ENCODE measurements at regions of chr6 and their contacts with region 1.

Region 1: GRCh38 chr6:27902335-27903314 is 9.6 kb downstream of the OR2B2 start:
- DNase-seq: peak; percentile 83 to 95 (median 91)
- ATAC-seq: peak; percentile 80
- H3K4me3 ChIP-seq: peak overlapping the region; percentile 61
- H3K4me3 Mint-ChIP-seq: peak overlapping the region; percentile 88
- H3K27ac ChIP-seq: peak overlapping the region; percentile 69 to 89
- H3K27ac Mint-ChIP-seq: peak overlapping the region; percentile 97
- H3K4me1 ChIP-seq: peaks cover 4% of the 10 kb centered on the region
- H3K4me1 Mint-ChIP-seq: peaks cover 5% of the 10 kb centered on the region
- H3K27me3 ChIP-seq: no peaks in the 10 kb centered on the region
- H3K27me3 Mint-ChIP-seq: peaks cover 8% of the 10 kb centered on the region
- CTCF ChIP-seq: no peak

Region 2: DNA sequence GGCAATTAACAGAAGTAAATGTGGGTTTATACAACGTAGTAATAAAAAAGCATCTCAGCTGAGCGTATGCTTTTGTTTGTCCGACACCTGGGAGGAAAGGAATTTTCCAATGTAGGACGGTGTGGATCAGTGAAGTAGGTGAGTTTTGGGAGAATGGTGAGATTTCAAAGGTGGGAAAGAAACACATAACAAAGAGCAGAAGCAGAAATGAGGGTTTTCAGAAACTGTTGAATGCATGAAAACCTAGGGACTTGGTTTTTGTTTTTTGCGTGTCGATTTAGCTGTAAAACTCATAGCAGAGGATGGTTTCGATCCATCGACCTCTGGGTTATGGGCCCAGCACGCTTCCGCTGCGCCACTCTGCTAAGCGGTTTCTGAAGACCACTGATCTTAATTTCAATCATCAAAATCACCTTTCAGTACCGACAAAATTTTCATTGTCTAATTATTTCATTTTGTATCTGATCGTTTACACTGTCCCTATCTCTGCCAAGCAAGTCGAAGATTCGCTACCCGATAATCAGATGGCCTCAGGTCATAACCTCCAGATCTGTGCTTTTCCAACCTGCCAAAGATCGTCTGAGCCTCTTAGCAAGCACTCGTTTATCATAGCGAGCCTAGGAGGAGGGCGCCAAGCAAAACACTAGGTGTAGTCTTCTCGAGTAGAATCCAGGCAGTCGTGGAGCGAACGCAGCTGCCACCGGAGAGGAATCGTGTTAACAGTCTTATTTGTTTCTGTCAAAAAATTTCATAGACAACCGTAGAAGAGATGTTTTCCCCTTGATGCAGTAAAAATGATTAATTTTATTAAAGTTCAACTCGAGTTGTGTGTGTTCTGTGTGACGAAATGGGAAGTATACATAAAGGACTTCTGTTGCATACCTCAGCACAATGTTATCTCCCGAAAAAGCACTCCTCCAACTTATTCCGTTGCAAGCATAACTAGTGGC is 569.7 kb before region 1 on chr6:
- CTCF ChIA-PET with region 1: no interaction called
- POLR2A ChIA-PET with region 1: no interaction called
- intact Hi-C with region 1: loop called in 1 of 2 experiments (anchors 10 kb)
- DNase-seq: peak in 8 of 9 experiments; percentile 12 to 78 (median 60)
- ATAC-seq: peak; percentile 86
- H3K4me3 ChIP-seq: peak overlapping the region; percentile 53
- H3K4me3 Mint-ChIP-seq: peak overlapping the region; percentile 87
- H3K27ac ChIP-seq: no peak overlapping the region
- H3K27ac Mint-ChIP-seq: peak overlapping the region; percentile 82
- H3K4me1 ChIP-seq: no peaks in the 10 kb centered on the region
- H3K4me1 Mint-ChIP-seq: peaks cover 15% of the 10 kb centered on the region
- H3K27me3 ChIP-seq: peaks cover 0 to 4% of the 10 kb centered on the region in 2 experiments
- H3K27me3 Mint-ChIP-seq: peaks cover 21% of the 10 kb centered on the region
- CTCF ChIP-seq: no peak

Region 3: DNA sequence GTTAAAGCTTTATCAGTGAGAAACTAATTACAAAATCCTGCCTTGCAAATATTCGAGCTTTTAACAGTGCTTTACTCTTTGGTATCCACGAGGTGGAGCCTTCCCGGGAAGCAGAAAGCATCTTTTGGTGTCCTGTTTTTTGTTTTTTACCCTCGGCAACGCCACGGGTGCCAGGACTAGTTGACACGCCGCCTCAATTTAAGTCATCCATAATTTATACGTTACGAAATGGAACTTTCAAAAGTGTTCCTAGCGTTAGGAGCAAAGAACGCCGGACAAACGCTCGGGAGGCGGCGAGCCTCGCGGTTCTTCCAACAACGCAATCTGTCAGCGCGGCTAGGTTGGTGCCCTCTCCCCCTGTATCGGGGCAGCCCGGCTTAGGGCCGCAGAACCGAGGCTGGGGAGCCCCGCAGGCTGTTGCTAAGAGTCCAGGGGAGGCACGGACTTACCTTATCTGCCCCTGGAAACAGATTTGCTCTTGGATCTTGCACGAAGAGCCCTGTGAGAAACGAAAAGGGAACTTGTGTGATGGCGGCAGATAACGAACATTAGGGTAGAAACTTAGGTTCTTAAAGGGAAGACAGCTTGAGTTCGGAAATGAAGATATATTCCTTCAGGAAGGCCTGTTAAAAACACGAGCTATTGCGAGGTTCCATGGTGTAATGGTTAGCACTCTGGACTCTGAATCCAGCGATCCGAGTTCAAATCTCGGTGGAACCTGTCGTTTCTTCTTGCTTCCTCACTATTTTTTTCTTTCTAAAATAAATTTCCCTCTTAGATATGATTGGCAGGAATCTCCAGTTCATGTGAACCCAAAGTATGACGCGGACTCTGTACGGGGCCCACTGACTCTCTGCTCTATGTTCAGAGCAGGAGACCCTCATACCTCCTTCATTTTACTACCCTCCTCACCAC is 383.5 kb before region 1 on chr6:
- CTCF ChIA-PET with region 1: interaction called, 15 read pairs
- POLR2A ChIA-PET with region 1: no interaction called
- intact Hi-C with region 1: loop called in 1 of 2 experiments (anchors 1 kb)
- DNase-seq: peak; percentile 29 to 88 (median 61)
- ATAC-seq: peak; percentile 78
- H3K4me3 ChIP-seq: peak overlapping the region; percentile 74 to 88
- H3K4me3 Mint-ChIP-seq: peak overlapping the region; percentile 83
- H3K27ac ChIP-seq: peak overlapping the region; percentile 59 to 72
- H3K27ac Mint-ChIP-seq: peak overlapping the region; percentile 83
- H3K4me1 ChIP-seq: peaks cover 10% of the 10 kb centered on the region
- H3K4me1 Mint-ChIP-seq: peaks cover 19% of the 10 kb centered on the region
- H3K27me3 ChIP-seq: peaks cover 0 to 9% of the 10 kb centered on the region in 2 experiments
- H3K27me3 Mint-ChIP-seq: peaks cover 18% of the 10 kb centered on the region
- CTCF ChIP-seq: peak; percentile 77

Region 4: GRCh38 chr6:27630727-27631608 is 271.7 kb before region 1 on chr6:
- CTCF ChIA-PET with region 1: no interaction called
- POLR2A ChIA-PET with region 1: no interaction called
- intact Hi-C with region 1: no loop called
- DNase-seq: peak in 2 of 9 experiments; percentile 8 to 11
- ATAC-seq: no peak
- H3K4me3 ChIP-seq: peak overlapping the region in 1 of 2 experiments; percentile 37
- H3K4me3 Mint-ChIP-seq: peak overlapping the region; percentile 72
- H3K27ac ChIP-seq: no peak overlapping the region
- H3K27ac Mint-ChIP-seq: no peak overlapping the region
- H3K4me1 ChIP-seq: peaks cover 8% of the 10 kb centered on the region
- H3K4me1 Mint-ChIP-seq: peaks cover 14% of the 10 kb centered on the region
- H3K27me3 ChIP-seq: peaks cover 7 to 21% of the 10 kb centered on the region in 2 experiments
- H3K27me3 Mint-ChIP-seq: peaks cover 71% of the 10 kb centered on the region
- CTCF ChIP-seq: no peak

Region 5: GRCh38 chr6:27650620-27651370 is 251.8 kb before region 1 on chr6:
- CTCF ChIA-PET with region 1: no interaction called
- POLR2A ChIA-PET with region 1: no interaction called
- intact Hi-C with region 1: no loop called
- DNase-seq: peak in 2 of 9 experiments; percentile 19 to 45
- ATAC-seq: no peak
- H3K4me3 ChIP-seq: no peak overlapping the region
- H3K4me3 Mint-ChIP-seq: no peak overlapping the region
- H3K27ac ChIP-seq: no peak overlapping the region
- H3K27ac Mint-ChIP-seq: no peak overlapping the region
- H3K4me1 ChIP-seq: no peaks in the 10 kb centered on the region
- H3K4me1 Mint-ChIP-seq: no peaks in the 10 kb centered on the region
- H3K27me3 ChIP-seq: peaks cover 6 to 15% of the 10 kb centered on the region in 2 experiments
- H3K27me3 Mint-ChIP-seq: peaks cover 60% of the 10 kb centered on the region
- CTCF ChIP-seq: no peak

Region 6: GRCh38 chr6:28104392-28105244 is 202.0 kb after region 1 on chr6:
- CTCF ChIA-PET with region 1: no interaction called
- POLR2A ChIA-PET with region 1: no interaction called
- intact Hi-C with region 1: loop called (anchors 5 to 10 kb)
- DNase-seq: peak; percentile 76 to 93 (median 85)
- ATAC-seq: peak; percentile 99
- H3K4me3 ChIP-seq: peak overlapping the region; percentile 69 to 73
- H3K4me3 Mint-ChIP-seq: peak overlapping the region; percentile 90
- H3K27ac ChIP-seq: peak overlapping the region; percentile 53 to 83
- H3K27ac Mint-ChIP-seq: peak overlapping the region; percentile 89
- H3K4me1 ChIP-seq: peaks cover 5% of the 10 kb centered on the region
- H3K4me1 Mint-ChIP-seq: peaks cover 11% of the 10 kb centered on the region
- H3K27me3 ChIP-seq: no peaks in the 10 kb centered on the region
- H3K27me3 Mint-ChIP-seq: peaks cover under 1% of the 10 kb centered on the region
- CTCF ChIP-seq: peak; percentile 60

Region 7: DNA sequence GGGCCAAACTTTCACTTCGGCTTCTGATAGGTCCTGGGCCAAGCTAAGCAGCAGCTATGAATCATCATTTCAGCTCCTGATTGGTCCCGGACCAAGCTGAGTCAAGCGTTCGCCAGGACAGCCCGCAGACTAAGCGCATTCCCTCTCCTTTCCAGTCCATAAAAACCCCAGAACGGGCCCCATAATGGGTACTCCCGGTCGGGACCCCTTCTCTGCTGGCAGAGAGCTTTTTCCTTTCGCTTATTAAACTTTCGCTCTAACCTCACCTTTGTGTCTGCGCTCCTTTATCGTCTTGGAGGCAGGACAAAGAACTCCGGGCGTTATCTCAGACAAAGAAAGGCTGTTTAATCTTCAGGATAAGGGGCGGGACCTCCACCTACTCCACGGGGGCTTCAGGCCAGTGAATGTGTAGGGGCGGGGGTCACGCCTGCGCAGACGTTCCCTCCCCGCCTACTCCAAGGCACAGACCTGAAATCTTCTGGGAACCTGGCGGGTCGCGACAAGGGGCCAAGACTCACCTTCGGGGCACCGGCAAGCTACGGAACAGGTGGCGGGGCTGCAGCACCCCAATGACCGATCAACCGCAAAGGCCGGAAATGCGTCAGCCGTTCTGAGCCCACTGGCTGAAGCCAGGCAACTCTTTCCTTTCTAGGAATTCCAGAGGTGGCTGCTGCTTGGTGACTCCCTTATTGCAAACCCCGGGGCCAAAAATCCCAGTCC is 433.1 kb after region 1 on chr6 and contains the start of gene ZSCAN31:
- CTCF ChIA-PET with region 1: no interaction called
- POLR2A ChIA-PET with region 1: no interaction called
- intact Hi-C with region 1: loop called in 1 of 2 experiments (anchors 5 kb)
- DNase-seq: peak; percentile 64 to 94 (median 80)
- ATAC-seq: peak; percentile 86
- H3K4me3 ChIP-seq: peak within 1 kb of the TSS; percentile 77 to 85
- H3K4me3 Mint-ChIP-seq: no peak within 1 kb of the TSS
- H3K27ac ChIP-seq: peak within 1 kb of the TSS; percentile 94 to 96
- H3K27ac Mint-ChIP-seq: no peak within 1 kb of the TSS
- H3K4me1 ChIP-seq: peaks cover 15% of the 10 kb centered on the region
- H3K4me1 Mint-ChIP-seq: peaks cover 9% of the 10 kb centered on the region
- H3K27me3 ChIP-seq: no peaks in the 10 kb centered on the region
- H3K27me3 Mint-ChIP-seq: no peaks in the 10 kb centered on the region
- CTCF ChIP-seq: no peak
- total RNA-seq, gene ZSCAN31: 1.4 to 1.9 TPM

Region 8: GRCh38 chr6:28940858-28941680 is 1038.4 kb after region 1 on chr6:
- CTCF ChIA-PET with region 1: no interaction called
- POLR2A ChIA-PET with region 1: no interaction called
- intact Hi-C with region 1: loop called in 1 of 2 experiments (anchors 5 kb)
- DNase-seq: peak in 8 of 9 experiments; percentile 58 to 92 (median 70)
- ATAC-seq: peak; percentile 70
- H3K4me3 ChIP-seq: peak overlapping the region; percentile 66 to 81
- H3K4me3 Mint-ChIP-seq: peak overlapping the region; percentile 91
- H3K27ac ChIP-seq: peak overlapping the region; percentile 70 to 79
- H3K27ac Mint-ChIP-seq: peak overlapping the region; percentile 96
- H3K4me1 ChIP-seq: peaks cover 40% of the 10 kb centered on the region
- H3K4me1 Mint-ChIP-seq: peaks cover 46% of the 10 kb centered on the region
- H3K27me3 ChIP-seq: no peaks in the 10 kb centered on the region
- H3K27me3 Mint-ChIP-seq: no peaks in the 10 kb centered on the region
- CTCF ChIP-seq: no peak